ENCODE measurements at regions of chr3 and their contacts with region 1.

Region 1: DNA sequence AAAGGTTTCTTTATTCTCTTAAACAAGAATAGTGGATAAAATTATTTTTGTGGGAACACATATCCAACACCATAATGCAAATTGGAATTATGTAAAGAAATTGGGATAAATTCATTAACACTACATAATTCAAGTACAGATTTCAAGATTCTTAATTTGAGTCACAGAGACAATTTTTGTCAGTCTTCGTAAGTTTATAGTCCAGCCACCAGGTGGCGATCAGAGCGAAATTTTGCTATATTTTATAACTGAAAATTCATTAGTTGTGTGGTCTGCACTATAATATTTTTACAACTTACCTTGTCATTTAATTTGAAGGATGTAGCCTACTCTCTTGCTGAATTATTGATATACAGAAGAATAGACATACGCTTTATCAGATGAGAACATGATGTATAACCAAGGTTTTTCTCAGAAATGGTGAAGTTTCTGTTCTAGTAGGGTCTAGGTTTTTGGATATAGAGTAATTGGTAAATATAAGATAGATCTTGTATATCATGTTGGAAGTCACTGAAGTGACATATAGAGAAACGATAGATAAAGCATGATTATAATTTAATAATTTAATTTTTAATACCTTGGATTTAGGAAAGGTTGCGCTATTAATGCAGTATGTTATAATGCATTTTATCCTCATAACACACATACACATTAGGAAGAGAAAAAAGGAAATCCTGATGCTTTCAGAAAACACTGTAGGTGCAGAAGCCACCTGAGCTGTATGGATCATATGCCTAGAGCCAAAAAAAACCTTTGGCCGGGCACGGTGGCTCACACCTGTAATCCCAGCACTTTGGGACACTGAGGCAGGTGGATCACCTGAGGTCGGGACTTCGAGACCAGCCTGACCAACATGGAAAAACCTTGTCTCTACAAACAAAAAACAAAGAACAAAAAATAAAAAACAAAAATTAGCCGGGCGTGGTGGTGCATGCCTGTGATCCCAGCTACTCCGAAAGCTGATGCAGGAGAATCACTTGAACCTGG is 31.7 kb downstream of the PLSCR4 start:
- DNase-seq: peak in 1 of 2 experiments; percentile 23
- H3K4me3 ChIP-seq: no peak overlapping the region
- H3K4me3 Mint-ChIP-seq: no peak overlapping the region
- H3K27ac Mint-ChIP-seq: no peak overlapping the region
- H3K4me1 ChIP-seq: peaks cover 40% of the 10 kb centered on the region
- H3K4me1 Mint-ChIP-seq: peaks cover 19% of the 10 kb centered on the region
- H3K27me3 ChIP-seq: no peaks in the 10 kb centered on the region
- H3K27me3 Mint-ChIP-seq: no peaks in the 10 kb centered on the region
- CTCF ChIP-seq: peak; percentile 61 to 74

Region 2: DNA sequence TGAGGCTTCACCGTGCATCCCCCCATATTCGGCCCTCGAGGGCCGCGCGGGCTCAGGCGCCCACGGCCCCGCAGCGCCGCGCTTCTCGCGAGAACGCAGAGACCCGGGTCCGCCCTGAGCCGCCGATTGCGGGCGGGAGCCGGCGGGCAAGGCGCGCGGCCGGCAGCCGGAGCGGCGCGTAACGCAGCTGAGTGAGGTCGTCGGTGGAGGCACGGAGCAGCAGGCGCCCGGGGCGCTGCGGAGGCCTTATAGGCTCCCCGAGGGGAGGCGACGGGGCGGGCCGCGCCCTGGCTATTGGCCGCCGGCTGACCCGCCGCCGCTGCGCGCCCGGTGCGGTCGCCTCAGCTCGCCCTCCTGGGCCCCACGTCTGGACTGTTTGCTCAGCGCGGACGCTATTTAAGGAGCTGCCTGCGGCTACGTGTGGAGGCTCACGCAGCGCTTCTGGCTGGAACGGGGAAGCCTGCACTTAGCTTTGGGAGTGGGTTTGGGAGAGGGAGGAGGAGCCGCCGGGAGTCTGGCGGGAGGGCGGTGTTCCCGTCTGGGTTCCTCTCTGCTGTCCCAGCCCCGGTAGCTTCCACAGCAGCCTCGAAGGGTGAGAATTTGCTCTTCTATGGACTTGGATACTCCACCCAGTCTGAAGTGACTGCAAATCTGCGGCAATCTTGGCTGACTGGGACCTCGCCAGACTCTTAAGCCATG is 58.1 kb before region 1 on chr3 and contains the start of gene PLOD2:
- CTCF ChIA-PET with region 1: no interaction called
- POLR2A ChIA-PET with region 1: interaction called, 6 read pairs
- intact Hi-C with region 1: loop called (anchors 1 kb)
- DNase-seq: peak; percentile 90 to 91
- H3K4me3 ChIP-seq: peak within 1 kb of the TSS; percentile 92
- H3K4me3 Mint-ChIP-seq: peak within 1 kb of the TSS; percentile 80
- H3K27ac Mint-ChIP-seq: peak within 1 kb of the TSS; percentile 81
- H3K4me1 ChIP-seq: no peaks in the 10 kb centered on the region
- H3K4me1 Mint-ChIP-seq: peaks cover 29% of the 10 kb centered on the region
- H3K27me3 ChIP-seq: no peaks in the 10 kb centered on the region
- H3K27me3 Mint-ChIP-seq: no peaks in the 10 kb centered on the region
- CTCF ChIP-seq: no peak
- total RNA-seq, gene PLOD2: 49.4 and 53.1 TPM in 2 replicates

Region 3: DNA sequence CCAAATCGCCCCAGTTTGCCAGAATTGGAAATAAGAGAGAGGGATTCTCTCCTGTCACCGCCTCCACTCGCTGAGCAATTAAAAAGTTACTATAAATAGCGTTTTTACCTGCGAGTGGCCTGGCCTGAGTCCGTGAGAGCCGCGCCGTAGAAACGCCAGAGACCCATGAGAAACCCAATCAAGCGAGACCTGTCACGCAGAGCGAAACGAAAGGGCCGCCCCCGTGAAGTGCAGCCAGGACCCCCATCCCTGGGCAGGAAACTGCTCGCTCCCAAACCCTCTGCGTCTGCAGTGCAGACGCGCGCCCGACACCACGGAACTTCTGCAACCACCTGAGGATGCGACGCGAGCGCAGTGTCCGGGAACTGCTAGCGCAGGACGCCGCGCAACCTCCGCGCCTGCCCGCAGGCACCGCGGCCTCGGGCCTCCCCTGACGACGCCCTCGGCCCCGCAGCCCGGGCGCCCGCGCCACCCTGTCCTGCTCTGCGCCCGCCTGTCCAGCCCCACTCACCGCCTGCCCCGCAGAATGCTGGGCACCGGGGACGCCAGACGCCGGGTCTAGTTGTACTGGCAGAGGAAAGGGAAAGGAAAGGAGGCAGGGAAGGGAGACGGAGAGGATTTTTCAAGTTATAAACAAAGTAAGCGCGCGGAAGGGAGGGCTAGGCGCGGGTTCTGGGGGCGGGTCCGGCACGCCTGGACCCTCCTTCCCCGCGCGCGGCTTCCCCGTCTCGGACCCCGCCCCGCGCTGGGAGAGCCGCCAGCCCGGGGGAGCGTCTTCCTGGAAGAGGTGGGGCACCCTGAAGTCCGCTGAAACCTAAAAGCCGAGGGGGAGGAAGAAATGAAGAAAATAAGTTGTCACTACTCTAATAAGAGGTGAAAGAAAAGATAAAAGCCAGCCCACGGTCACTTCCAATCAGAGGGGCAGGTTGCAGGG is 31.5 kb after region 1 on chr3 and contains the start of gene PLSCR4:
- CTCF ChIA-PET with region 1: no interaction called
- POLR2A ChIA-PET with region 1: no interaction called
- intact Hi-C with region 1: loop called (anchors 2 kb)
- DNase-seq: peak; percentile 39 to 54
- H3K4me3 ChIP-seq: peak within 1 kb of the TSS; percentile 81
- H3K4me3 Mint-ChIP-seq: peak within 1 kb of the TSS; percentile 94
- H3K27ac Mint-ChIP-seq: peak within 1 kb of the TSS; percentile 76
- H3K4me1 ChIP-seq: no peaks in the 10 kb centered on the region
- H3K4me1 Mint-ChIP-seq: no peaks in the 10 kb centered on the region
- H3K27me3 ChIP-seq: no peaks in the 10 kb centered on the region
- H3K27me3 Mint-ChIP-seq: no peaks in the 10 kb centered on the region
- CTCF ChIP-seq: no peak
- total RNA-seq, gene PLSCR4: 7.9 and 9.1 TPM in 2 replicates

Region 4: DNA sequence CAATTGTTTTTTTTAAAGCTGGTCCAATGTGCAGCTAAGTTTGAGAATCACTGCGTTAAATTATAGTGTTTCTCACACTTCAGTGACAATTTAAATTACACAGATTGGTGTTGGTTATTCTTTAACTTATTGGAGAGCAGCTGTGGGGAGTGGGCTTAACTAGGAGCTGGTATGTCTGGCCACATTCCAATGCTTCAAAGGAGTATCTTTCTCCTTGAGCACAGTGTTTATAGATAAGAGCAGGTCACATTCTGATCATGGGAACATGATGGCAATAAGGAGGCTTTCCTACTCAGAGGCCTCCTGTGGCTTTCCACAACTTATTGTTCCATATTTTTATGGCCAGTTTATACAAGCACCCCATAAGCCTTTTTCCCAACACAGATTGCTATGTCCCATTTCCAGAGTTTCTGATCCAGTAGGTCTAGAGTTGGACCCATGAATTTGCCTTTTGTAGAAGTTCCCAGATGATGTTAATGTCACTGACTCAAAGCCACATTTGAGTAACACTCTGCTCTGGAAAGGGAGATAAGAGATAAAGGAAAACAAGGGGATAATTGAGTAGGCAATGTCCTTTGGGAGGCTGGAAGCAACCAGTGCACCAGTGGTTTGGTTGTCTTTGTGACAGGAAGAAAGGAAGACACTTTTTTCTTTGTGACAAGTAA is 64.7 kb after region 1 on chr3:
- CTCF ChIA-PET with region 1: interaction called, 3 read pairs
- POLR2A ChIA-PET with region 1: no interaction called
- intact Hi-C with region 1: loop called (anchors 1 kb)
- DNase-seq: peak; percentile 78 to 80
- H3K4me3 ChIP-seq: no peak overlapping the region
- H3K4me3 Mint-ChIP-seq: peak overlapping the region; percentile 66
- H3K27ac Mint-ChIP-seq: peak overlapping the region; percentile 95
- H3K4me1 ChIP-seq: peaks cover 40% of the 10 kb centered on the region
- H3K4me1 Mint-ChIP-seq: peaks cover 23% of the 10 kb centered on the region
- H3K27me3 ChIP-seq: no peaks in the 10 kb centered on the region
- H3K27me3 Mint-ChIP-seq: no peaks in the 10 kb centered on the region
- CTCF ChIP-seq: no peak

Region 5: DNA sequence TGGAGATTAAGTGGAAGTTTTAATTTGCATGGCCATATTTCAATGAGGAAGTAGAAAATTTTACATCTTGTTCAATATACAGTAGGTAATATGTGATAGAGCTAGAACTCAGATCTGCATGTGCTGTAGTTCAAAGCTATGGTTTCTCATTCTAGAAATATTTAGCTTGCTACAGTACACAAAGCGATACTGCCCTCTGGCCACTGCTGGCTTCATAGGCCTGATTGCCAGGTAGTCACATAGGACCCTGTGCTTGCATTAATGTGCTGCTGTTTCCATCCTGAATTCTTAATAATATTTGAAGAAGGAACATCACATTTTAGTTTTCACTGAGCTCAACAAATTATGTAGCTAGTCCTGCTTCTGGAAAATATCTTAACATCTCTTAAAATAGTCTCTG is 163.2 kb after region 1 on chr3:
- CTCF ChIA-PET with region 1: interaction called, 18 read pairs
- POLR2A ChIA-PET with region 1: no interaction called
- intact Hi-C with region 1: loop called (anchors 1 kb)
- DNase-seq: peak; percentile 34 to 45
- H3K4me3 ChIP-seq: no peak overlapping the region
- H3K4me3 Mint-ChIP-seq: no peak overlapping the region
- H3K27ac Mint-ChIP-seq: no peak overlapping the region
- H3K4me1 ChIP-seq: no peaks in the 10 kb centered on the region
- H3K4me1 Mint-ChIP-seq: peaks cover 7% of the 10 kb centered on the region
- H3K27me3 ChIP-seq: no peaks in the 10 kb centered on the region
- H3K27me3 Mint-ChIP-seq: no peaks in the 10 kb centered on the region
- CTCF ChIP-seq: peak; percentile 35 to 66

Region 6: DNA sequence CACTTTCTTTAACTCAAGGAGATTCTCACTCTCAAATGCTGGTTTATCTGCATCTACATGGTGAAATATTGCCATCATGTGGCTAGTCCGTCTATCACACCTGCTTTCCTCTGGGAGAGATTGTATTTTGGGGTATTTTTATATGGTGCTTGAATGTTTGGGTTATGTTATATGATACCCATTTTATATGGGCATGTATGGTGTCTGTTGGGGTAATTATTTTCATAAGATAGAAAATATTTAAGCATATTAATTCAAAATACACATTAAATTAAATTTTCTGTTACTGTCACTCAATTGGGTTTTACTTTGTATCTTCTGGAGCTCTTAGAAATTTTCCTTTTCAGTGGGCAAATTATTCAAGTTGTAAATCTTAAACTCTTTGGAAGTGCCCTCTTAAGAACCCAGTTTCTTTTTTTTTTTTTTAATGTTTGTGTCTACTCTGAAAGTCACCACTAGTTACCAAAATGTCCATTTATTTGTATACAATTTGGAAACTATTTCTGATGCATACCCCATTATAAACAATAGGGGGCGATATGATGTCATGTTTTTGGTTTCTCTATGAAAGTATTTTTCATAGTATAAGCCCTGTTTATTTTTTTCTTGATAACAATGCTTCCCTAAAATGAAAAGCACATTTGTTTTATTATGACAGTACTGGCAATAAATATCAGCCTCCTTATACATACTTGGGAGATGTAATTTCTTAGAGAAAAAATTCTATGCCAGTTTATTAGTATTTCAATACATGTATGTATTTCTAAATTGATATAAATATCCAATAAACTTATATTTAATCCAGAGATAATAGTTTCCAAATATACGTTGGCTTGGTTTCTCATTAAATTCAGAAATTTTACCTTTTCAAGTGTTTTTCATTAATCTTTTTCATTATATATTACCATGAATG is 422.0 kb after region 1 on chr3:
- CTCF ChIA-PET with region 1: no interaction called
- POLR2A ChIA-PET with region 1: no interaction called
- intact Hi-C with region 1: loop called (anchors 1 kb)
- DNase-seq: peak in 1 of 2 experiments; percentile 34
- H3K4me3 ChIP-seq: no peak overlapping the region
- H3K4me3 Mint-ChIP-seq: no peak overlapping the region
- H3K27ac Mint-ChIP-seq: no peak overlapping the region
- H3K4me1 ChIP-seq: peaks cover 6% of the 10 kb centered on the region
- H3K4me1 Mint-ChIP-seq: no peaks in the 10 kb centered on the region
- H3K27me3 ChIP-seq: no peaks in the 10 kb centered on the region
- H3K27me3 Mint-ChIP-seq: no peaks in the 10 kb centered on the region
- CTCF ChIP-seq: peak; percentile 33 to 54

Measured in Caco-2 (cell line).